Naive thymus-derived CD4-positive, alpha-beta T cell (primary cell): ENCODE measurements at regions of chr14 and their contacts with region 1.

Region 1: DNA sequence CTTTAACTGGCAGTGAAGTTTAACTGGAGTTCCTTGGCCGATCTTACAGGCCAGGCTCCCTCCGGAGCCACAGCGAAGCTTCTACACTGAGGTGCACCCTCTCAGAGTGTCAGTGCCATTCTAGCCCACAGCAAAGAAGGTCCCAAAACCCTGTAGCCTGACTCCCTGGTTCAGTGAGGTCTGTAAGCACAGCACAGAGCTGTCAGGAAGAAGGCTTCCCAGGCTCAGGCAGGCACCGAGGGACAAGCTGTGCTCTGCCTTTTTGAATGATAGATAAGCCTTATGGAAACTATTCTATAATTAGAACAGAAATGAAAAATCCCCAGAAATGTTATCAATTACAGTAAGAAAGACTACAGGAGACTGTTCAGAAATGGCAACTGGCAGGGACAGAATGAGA is 40.2 kb downstream of the MOK start:
- DNase-seq: no peak
- ATAC-seq: no peak
- H3K4me3 ChIP-seq: no peak overlapping the region
- H3K4me3 Mint-ChIP-seq: no peak overlapping the region
- H3K27ac ChIP-seq: no peak overlapping the region
- H3K27ac Mint-ChIP-seq: no peak overlapping the region
- H3K4me1 ChIP-seq: no peaks in the 10 kb centered on the region
- H3K4me1 Mint-ChIP-seq: no peaks in the 10 kb centered on the region
- H3K27me3 ChIP-seq: no peaks in the 10 kb centered on the region
- H3K27me3 Mint-ChIP-seq: peaks cover 0 to 10% (median 0%) of the 10 kb centered on the region in 5 donors

Region 2: DNA sequence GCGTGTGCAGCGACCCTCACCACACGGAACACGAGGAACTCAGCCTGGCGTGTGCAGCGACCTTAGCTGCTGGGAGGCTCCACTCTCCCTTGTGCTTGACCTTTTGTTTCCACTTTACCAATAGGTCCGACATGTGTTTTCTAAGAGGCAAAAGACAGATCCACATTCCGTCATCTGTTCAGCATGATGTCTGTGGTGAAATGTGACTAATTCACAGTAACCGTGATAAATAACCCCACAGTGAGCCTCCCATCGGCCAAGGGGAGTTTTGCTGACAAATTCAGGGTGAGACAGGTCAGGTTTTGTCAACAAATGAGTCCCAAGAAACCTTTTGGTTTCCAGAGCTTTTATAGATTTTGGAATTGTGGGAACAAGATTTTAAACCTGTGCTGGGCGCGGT is 15.7 kb before region 1 on chr14:
- CTCF ChIA-PET with region 1: no interaction called
- POLR2A ChIA-PET with region 1: no interaction called
- intact Hi-C with region 1: loop called in 1 of 2 experiments (anchors 1 kb)
- DNase-seq: no peak
- ATAC-seq: no peak
- H3K4me3 ChIP-seq: no peak overlapping the region
- H3K4me3 Mint-ChIP-seq: no peak overlapping the region
- H3K27ac ChIP-seq: no peak overlapping the region
- H3K27ac Mint-ChIP-seq: no peak overlapping the region
- H3K4me1 ChIP-seq: no peaks in the 10 kb centered on the region
- H3K4me1 Mint-ChIP-seq: no peaks in the 10 kb centered on the region
- H3K27me3 ChIP-seq: no peaks in the 10 kb centered on the region
- H3K27me3 Mint-ChIP-seq: no peaks in the 10 kb centered on the region